Ascending aorta (tissue), 2 donors: ENCODE measurements at regions of chr14 and their contacts with region 1.

Region 1: DNA sequence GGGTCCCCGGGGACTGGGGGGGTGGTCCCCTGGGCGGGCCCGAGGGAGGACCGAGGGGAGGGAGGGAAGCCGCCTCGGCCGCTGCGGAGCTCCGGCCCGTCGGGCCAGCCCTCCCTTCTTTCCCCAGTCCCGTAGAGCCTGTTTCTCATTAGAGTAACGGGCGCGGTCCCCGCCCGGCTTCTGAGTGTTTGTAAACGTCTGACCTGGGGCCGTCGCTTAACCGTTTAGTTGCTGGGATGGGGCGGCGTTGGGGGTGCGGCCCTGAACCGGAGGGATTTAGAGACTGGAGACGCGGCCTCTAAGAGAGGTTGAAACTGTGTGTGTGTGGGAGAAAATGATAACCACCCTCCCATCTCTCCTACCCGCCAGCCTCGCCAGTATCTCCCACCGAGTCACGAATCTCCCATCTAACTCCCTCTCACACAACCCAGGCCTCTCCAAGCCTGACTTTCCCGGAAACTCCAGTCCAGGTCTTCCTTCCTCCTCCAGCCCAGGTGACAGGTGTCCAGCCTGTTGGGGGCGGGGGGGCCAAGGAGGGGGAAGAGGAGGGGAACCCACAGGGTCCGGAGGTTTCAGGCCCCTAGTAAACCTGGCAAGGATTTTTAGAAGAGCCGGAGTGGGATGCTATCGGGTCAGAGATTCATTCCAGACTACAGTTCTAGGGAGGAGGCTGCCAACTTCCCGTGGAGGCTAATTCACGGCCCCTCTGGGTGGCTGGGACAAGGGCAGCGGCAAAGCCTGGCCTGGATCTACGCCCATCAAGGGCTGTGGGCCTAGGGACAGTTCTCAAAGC is 1.1 kb upstream of the NFATC4 start:
- DNase-seq: peak; percentile 65 to 96
- H3K4me3 ChIP-seq: peak overlapping the region; percentile 67 to 78
- H3K27ac ChIP-seq: peak overlapping the region; percentile 96 to 99
- H3K4me1 ChIP-seq: peaks cover 6 to 18% of the 10 kb centered on the region in 2 donors
- H3K27me3 ChIP-seq: no peaks in the 10 kb centered on the region
- CTCF ChIP-seq: no peak

Region 2: DNA sequence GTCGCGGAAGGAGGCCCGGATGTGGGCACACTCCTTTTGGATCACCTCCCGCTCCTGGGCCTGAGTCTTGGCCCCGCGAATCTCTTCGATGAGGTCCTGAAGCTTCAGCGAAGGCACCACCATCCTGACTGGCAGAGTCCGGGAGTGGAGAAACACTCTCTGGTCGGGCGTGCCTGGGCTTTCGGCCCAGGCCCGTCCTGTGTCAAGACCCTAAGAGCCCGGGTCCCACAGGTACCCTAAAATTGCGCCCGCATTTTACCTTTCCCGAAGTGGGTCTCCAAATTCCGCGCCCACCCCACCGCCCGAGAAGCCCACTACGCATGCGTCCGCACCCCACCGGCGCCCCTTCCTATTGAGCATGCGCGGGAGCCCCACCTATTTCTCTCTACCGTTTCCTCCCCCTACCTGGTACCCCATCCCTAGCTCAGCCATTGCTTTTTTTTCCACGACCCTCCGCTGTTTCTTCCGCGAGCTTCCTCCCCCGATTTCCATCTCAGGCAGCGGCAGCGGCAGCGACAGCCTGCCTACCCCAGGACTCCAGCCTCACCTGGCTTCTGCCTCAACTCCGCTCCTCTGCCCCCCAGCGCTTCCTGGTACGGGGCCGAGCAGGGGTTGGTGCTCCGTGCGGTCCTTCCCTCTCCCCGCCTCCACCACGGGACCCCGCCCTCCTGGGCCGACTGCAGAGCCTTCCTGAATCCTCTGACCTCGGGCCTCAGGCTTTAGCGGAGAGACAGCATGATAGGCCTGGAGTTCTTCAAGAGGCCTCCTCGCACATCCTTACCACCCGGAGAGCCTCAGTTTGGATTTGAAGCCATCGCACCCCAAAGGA is 799.5 kb before region 1 on chr14 and contains the start of gene AP1G2:
- intact Hi-C with region 1: loop called (anchors 10 kb)
- DNase-seq: peak; percentile 42 to 86
- H3K4me3 ChIP-seq: peak within 1 kb of the TSS; percentile 65 to 68
- H3K27ac ChIP-seq: peak within 1 kb of the TSS; percentile 39 to 41
- H3K4me1 ChIP-seq: peaks cover 0 to 8% of the 10 kb centered on the region in 2 donors
- H3K27me3 ChIP-seq: no peaks in the 10 kb centered on the region
- CTCF ChIP-seq: no peak
- total RNA-seq, gene AP1G2: 56.2 TPM

Region 3: DNA sequence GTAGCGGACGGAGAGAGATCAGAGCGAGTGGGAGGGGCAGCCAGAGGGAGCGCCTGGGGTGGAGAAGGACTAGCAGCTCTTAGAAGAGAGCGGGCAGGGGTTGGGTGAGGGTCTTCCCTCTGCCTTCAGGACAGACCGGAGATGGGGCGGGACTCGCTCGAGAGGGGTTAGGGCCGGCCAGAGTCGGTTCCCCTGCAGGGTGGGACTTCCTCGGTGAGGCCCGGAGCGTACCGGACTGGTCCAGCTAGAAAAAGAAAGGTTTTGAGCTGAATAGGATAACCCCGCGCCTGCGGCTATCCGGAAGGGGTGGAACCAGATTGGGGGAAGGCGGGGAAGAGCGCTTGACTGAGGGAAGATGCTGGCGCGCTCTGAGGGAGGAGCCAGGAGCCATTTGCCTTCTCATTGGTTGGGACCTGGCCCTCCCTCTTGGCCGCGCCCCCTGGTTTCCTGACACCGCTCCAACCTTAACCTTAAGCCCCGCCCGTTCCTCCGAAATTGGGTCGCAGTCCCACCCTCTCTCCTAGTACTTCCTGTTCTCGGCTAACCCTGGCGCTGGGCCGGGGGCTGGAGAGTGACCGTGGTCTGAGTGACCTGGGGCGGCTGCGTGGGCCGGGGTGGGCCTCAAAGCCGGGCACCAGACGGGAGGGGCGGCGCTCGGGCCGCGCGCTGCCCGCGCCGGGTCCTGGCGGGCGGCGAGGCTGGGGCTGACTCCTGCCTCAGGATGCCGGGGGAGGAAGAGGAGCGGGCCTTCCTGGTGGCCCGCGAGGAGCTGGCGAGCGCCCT is 219.7 kb before region 1 on chr14 and contains the start of gene RNF31:
- intact Hi-C with region 1: loop called (anchors 2 kb)
- DNase-seq: peak; percentile 95 to 99
- H3K4me3 ChIP-seq: peak within 1 kb of the TSS; percentile 76 to 100
- H3K27ac ChIP-seq: peak within 1 kb of the TSS; percentile 75 to 90
- H3K4me1 ChIP-seq: peaks cover 21 to 23% of the 10 kb centered on the region in 2 donors
- H3K27me3 ChIP-seq: no peaks in the 10 kb centered on the region
- CTCF ChIP-seq: no peak
- total RNA-seq, gene RNF31: 182 TPM

Region 4: DNA sequence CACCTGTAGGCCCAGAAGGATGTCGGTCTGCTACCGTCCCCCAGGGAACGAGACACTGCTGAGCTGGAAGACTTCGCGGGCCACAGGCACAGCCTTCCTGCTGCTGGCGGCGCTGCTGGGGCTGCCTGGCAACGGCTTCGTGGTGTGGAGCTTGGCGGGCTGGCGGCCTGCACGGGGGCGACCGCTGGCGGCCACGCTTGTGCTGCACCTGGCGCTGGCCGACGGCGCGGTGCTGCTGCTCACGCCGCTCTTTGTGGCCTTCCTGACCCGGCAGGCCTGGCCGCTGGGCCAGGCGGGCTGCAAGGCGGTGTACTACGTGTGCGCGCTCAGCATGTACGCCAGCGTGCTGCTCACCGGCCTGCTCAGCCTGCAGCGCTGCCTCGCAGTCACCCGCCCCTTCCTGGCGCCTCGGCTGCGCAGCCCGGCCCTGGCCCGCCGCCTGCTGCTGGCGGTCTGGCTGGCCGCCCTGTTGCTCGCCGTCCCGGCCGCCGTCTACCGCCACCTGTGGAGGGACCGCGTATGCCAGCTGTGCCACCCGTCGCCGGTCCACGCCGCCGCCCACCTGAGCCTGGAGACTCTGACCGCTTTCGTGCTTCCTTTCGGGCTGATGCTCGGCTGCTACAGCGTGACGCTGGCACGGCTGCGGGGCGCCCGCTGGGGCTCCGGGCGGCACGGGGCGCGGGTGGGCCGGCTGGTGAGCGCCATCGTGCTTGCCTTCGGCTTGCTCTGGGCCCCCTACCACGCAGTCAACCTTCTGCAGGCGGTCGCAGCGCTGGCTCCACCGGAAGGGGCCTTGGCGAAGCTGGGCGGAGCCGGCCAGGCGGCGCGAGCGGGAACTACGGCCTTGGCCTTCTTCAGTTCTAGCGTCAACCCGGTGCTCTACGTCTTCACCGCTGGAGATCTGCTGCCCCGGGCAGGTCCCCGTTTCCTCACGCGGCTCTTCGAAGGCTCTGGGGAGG is 56.0 kb before region 1 on chr14 and contains the start of gene LTB4R:
- intact Hi-C with region 1: no loop called
- DNase-seq: peak in 1 of 2 donors; percentile 81
- H3K4me3 ChIP-seq: peak within 1 kb of the TSS; percentile 61 to 68
- H3K27ac ChIP-seq: peak within 1 kb of the TSS; percentile 65 to 68
- H3K4me1 ChIP-seq: peaks cover 8 to 14% of the 10 kb centered on the region in 2 donors
- H3K27me3 ChIP-seq: no peaks in the 10 kb centered on the region
- CTCF ChIP-seq: peak in 2 of 3 experiments; percentile 21 to 52
- total RNA-seq, gene LTB4R: 3.6 TPM

Region 5: DNA sequence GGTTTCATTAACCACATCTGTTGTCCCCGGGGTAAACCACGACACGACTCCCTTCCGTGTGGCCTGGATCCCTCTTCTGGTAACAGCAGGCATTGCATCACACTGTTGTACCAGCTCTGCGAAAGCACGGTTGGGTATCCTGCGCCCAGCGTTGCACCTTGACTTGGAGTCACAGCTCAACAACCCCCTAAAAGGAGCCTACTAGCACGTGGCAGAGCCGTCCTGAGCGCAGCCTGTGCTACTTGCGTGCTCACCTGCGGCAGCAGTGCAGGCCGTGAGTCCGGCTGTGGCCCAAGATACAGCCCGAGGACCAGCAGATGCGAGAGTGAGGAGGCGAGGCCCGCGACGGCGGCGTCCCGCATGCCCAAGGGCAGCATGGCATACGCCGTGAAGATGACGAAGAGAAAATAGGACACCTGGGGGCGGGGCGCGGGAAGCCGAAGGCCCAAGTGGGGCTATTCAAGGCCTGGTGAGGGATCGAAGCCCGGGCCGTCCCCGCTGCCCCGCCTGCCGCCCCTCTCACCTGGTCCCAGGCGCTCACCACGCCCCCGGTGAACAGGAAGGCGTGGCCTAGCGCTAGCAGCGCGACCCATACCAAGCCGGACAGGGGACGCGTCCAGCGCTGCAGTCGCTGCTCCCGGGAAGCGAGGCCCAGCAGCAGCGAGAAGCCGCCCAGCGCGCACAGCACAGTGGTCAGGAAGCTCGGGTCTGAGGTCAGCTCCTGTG is 34.5 kb before region 1 on chr14:
- intact Hi-C with region 1: loop called (anchors 2 kb)
- DNase-seq: peak in 1 of 2 donors; percentile 86
- H3K4me3 ChIP-seq: peak overlapping the region; percentile 42 to 53
- H3K27ac ChIP-seq: no peak overlapping the region
- H3K4me1 ChIP-seq: peaks cover 7 to 20% of the 10 kb centered on the region in 2 donors
- H3K27me3 ChIP-seq: peaks cover 12% of the 10 kb centered on the region
- CTCF ChIP-seq: peak; percentile 61 to 77 (median 74)

Region 6: GRCh38 chr14:24398653-24399446 is 31.9 kb after region 1 on chr14 and contains the start of gene NYNRIN:
- intact Hi-C with region 1: loop called (anchors 1 kb)
- DNase-seq: peak in 1 of 2 donors; percentile 74
- H3K4me3 ChIP-seq: peak within 1 kb of the TSS; percentile 73 to 76
- H3K27ac ChIP-seq: peak within 1 kb of the TSS; percentile 47 to 59
- H3K4me1 ChIP-seq: peaks cover 2 to 8% of the 10 kb centered on the region in 2 donors
- H3K27me3 ChIP-seq: no peaks in the 10 kb centered on the region
- CTCF ChIP-seq: no peak
- total RNA-seq, gene NYNRIN: 23.1 TPM

Region 7: GRCh38 chr14:24431569-24432258 is 64.8 kb after region 1 on chr14:
- intact Hi-C with region 1: loop called (anchors 1 kb)
- DNase-seq: peak; percentile 70 to 93
- H3K4me3 ChIP-seq: peak overlapping the region; percentile 78 to 92
- H3K27ac ChIP-seq: peak overlapping the region; percentile 88 to 96
- H3K4me1 ChIP-seq: peaks cover 5 to 27% of the 10 kb centered on the region in 2 donors
- H3K27me3 ChIP-seq: no peaks in the 10 kb centered on the region
- CTCF ChIP-seq: peak; percentile 84 to 92 (median 85)

Region 8: DNA sequence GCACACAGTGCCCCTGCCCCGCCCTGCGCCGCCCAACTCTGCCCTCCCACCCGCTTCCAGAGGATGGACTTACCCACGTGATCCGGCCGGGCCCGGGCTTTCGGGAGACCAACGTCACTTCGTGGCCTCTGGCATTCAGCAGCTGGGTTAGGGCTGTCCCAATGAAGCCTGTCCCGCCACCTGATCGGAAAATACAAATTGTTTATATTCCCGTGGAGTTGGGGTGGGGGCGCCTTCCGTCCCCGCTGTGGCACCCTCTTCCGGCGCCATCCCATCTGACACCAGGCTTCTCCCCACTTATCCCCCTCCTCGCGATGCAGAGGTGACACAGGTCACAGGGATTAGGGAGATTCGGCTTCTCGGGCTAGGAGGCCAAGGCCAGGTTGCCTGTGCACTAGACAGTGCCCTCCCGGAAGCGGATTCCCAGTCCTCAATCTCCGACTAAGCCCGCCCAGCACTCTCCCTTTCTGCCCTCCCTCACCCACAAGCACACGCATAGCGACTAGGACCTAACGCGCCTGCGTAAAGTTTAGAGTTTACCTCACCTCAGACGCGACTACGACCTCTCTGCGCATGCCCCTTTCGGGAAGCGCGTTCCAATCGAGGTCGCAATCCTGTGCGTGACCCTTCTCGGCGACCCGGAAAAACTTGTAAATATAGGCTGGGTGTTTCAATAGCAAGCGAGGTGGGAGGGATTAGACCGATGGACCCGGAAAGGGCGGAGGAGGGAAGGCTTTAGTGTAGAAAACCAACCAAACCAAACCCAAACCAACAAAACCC is 75.5 kb after region 1 on chr14 and contains the start of gene SDR39U1:
- intact Hi-C with region 1: loop called (anchors 1 kb)
- DNase-seq: peak; percentile 93 to 99
- H3K4me3 ChIP-seq: peak within 1 kb of the TSS; percentile 84 to 86
- H3K27ac ChIP-seq: peak within 1 kb of the TSS; percentile 100
- H3K4me1 ChIP-seq: peaks cover 0 to 15% of the 10 kb centered on the region in 2 donors
- H3K27me3 ChIP-seq: no peaks in the 10 kb centered on the region
- CTCF ChIP-seq: no peak
- total RNA-seq, gene SDR39U1: 98.3 TPM

Region 9: GRCh38 chr14:24456980-24457379 is 90.1 kb after region 1 on chr14:
- intact Hi-C with region 1: no loop called
- DNase-seq: no peak
- H3K4me3 ChIP-seq: no peak overlapping the region
- H3K27ac ChIP-seq: no peak overlapping the region
- H3K4me1 ChIP-seq: no peaks in the 10 kb centered on the region
- H3K27me3 ChIP-seq: no peaks in the 10 kb centered on the region
- CTCF ChIP-seq: no peak